ENCODE measurements at regions of chr4 and their contacts with region 1.

Region 1: DNA sequence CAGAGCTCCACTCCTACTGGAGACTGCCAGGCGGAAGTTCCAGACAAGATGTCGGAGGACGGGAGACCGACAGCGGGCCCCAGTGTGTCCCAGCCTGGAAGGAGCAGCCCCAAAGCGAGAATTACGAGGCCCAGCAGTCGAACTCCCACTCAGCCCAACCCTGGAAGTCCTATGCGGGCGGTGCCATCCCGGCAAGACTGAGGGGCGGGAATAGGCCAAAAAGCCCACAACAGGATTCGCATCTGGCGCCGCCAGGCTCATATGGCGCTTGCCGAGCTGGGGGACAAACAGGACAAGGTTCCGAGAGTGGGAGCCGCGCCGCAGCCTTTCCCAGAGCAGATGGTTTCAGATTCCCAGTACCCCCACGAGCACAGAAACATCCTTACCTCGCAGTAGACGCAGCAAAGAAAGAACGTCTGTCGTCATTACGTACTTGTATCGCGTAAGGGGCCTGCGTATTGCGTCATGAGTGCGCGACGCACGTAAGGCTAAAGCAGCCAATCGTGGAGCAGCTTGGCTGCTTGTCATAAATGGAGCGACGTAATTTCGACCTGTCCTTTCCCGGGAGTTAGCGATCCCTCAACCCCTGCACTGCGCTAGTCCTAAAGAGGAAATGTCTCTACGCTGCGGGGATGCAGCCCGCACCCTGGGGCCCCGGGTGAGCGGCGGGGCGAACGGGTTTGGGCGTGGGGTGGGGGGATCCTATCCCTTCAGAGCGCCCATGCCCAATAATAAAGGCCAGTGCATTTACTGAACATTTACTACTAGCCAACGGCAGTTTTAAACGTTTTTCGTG is at the starts of genes LIAS and RPL9:
- DNase-seq: peak; percentile 95
- ATAC-seq: peak; percentile 89
- H3K4me3 Mint-ChIP-seq: peak within 1 kb of the TSS; percentile 91
- H3K27ac Mint-ChIP-seq: peak within 1 kb of the TSS; percentile 97
- H3K4me1 Mint-ChIP-seq: peaks cover 56% of the 10 kb centered on the region
- H3K27me3 Mint-ChIP-seq: no peaks in the 10 kb centered on the region
- total RNA-seq, gene LIAS: 15.3 to 16.1 TPM
- total RNA-seq, gene RPL9: 1,107 to 1,219 TPM

Region 2: DNA sequence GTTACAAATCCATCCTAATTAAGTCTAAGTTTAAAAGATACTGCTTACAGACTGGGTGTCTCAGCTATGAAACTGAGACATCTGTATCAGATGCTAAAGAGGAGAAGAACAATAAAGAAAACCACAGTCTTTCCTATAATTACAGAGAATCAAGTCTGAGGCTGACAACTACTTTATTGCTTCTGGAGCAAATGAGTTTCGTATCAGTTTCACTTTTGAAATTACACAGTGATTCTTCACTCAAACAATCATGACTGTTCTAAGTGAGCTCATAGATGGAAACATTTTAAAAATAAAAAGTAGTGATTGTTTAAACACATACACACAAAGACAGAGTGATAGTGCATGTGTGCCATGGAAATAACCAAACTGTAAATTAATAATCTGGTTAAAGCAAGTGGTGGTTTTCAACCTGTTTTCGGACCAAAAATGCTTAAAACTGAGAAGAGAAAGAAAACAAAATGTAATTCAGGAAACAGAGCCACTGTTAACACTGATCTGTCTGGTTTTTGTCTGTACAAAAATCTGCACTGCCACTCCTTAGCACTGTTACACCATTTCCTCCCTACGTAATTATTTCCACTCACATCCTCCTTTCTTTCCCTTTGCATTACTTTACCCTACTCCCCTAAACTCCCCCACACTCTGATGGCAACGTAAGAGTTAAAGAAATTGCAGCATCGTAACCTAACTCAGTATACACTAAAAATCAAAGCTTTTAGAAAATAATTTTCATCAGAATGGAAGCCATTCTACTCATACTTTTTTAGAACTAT is 105.0 kb before region 1 on chr4:
- CTCF ChIA-PET with region 1: no interaction called
- POLR2A ChIA-PET with region 1: interaction called, 16 read pairs
- DNase-seq: peak; percentile 40
- ATAC-seq: peak; percentile 84
- H3K4me3 Mint-ChIP-seq: peak overlapping the region; percentile 83
- H3K27ac Mint-ChIP-seq: peak overlapping the region; percentile 98
- H3K4me1 Mint-ChIP-seq: peaks cover 55% of the 10 kb centered on the region
- H3K27me3 Mint-ChIP-seq: no peaks in the 10 kb centered on the region

Region 3: GRCh38 chr4:39365830-39366771 is 92.6 kb before region 1 on chr4 and contains the start of gene RFC1:
- CTCF ChIA-PET with region 1: interaction called, 3 read pairs
- POLR2A ChIA-PET with region 1: interaction called, 16 read pairs
- DNase-seq: peak; percentile 96
- ATAC-seq: peak; percentile 92
- H3K4me3 Mint-ChIP-seq: peak within 1 kb of the TSS; percentile 95
- H3K27ac Mint-ChIP-seq: peak within 1 kb of the TSS; percentile 95
- H3K4me1 Mint-ChIP-seq: peaks cover 29% of the 10 kb centered on the region
- H3K27me3 Mint-ChIP-seq: no peaks in the 10 kb centered on the region
- total RNA-seq, gene RFC1: 79.6 to 82.2 TPM

Region 4: GRCh38 chr4:39446751-39447573 is 11.7 kb before region 1 on chr4:
- CTCF ChIA-PET with region 1: interaction called, 6 read pairs
- POLR2A ChIA-PET with region 1: interaction called, 19 read pairs
- DNase-seq: peak; percentile 48
- ATAC-seq: peak; percentile 64
- H3K4me3 Mint-ChIP-seq: peak overlapping the region; percentile 38
- H3K27ac Mint-ChIP-seq: no peak overlapping the region
- H3K4me1 Mint-ChIP-seq: peaks cover 17% of the 10 kb centered on the region
- H3K27me3 Mint-ChIP-seq: no peaks in the 10 kb centered on the region

Region 5: GRCh38 chr4:39480902-39481695 is 22.4 kb after region 1 on chr4:
- CTCF ChIA-PET with region 1: no interaction called
- POLR2A ChIA-PET with region 1: no interaction called
- DNase-seq: no peak
- ATAC-seq: no peak
- H3K4me3 Mint-ChIP-seq: no peak overlapping the region
- H3K27ac Mint-ChIP-seq: no peak overlapping the region
- H3K4me1 Mint-ChIP-seq: no peaks in the 10 kb centered on the region
- H3K27me3 Mint-ChIP-seq: no peaks in the 10 kb centered on the region

Region 6: GRCh38 chr4:39697740-39698423 is 239.2 kb after region 1 on chr4 and contains the start of gene UBE2K:
- CTCF ChIA-PET with region 1: no interaction called
- POLR2A ChIA-PET with region 1: interaction called, 11 read pairs
- DNase-seq: peak; percentile 90
- ATAC-seq: peak; percentile 90
- H3K4me3 Mint-ChIP-seq: peak within 1 kb of the TSS; percentile 99
- H3K27ac Mint-ChIP-seq: peak within 1 kb of the TSS; percentile 99
- H3K4me1 Mint-ChIP-seq: peaks cover 38% of the 10 kb centered on the region
- H3K27me3 Mint-ChIP-seq: no peaks in the 10 kb centered on the region
- total RNA-seq, gene UBE2K: 74.9 to 78.7 TPM

Region 7: DNA sequence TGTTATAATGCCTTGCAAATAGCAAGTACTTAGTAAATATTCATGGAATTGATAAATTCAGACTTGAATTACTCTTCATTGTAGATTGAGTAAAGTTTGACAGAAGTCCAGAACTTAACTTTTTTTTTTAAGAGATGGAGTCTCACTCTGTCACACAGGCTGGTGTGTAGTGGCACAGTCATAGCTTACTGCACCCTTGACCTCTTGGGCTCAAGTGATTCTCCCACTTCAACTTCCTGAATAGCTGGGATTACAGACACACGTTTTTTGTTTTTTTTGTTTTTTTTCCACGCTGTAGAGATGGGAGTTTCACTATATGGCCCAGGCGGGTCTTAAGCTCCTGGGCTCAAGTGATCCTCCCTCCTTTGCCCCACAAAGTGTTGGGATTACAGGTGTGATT is 271.4 kb after region 1 on chr4:
- CTCF ChIA-PET with region 1: no interaction called
- POLR2A ChIA-PET with region 1: no interaction called
- DNase-seq: no peak
- ATAC-seq: no peak
- H3K4me3 Mint-ChIP-seq: no peak overlapping the region
- H3K27ac Mint-ChIP-seq: no peak overlapping the region
- H3K4me1 Mint-ChIP-seq: peaks cover 6% of the 10 kb centered on the region
- H3K27me3 Mint-ChIP-seq: no peaks in the 10 kb centered on the region

Region 8: DNA sequence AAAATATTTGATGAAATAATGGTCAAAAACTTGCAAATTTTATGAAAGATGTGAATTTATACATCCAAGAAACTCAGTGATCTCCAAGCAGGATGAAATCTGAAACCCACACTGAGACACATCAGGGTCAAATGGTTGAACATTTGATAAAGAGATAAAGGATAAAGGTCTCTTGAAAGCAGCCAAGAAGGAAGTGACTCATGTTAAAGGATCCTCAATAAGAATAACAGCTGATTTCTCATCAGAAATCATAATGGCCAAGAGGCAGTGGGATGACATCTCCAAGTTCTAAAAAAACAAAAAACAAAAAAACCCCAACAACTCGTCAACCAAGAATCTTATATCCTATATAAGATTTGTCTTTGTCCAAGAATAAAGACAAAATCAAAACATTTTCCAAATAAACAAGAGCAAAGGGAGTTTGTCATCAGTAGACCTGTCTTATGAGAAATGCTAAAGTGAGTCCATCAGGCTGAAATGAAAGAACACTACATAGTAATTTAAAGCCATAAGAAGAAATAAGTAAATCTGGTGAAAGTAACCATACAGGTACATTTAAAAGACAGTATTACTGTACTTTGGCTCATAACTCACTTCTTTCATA is 397.3 kb after region 1 on chr4:
- CTCF ChIA-PET with region 1: no interaction called
- POLR2A ChIA-PET with region 1: no interaction called
- DNase-seq: no peak
- ATAC-seq: no peak
- H3K4me3 Mint-ChIP-seq: no peak overlapping the region
- H3K27ac Mint-ChIP-seq: no peak overlapping the region
- H3K4me1 Mint-ChIP-seq: peaks cover 12% of the 10 kb centered on the region
- H3K27me3 Mint-ChIP-seq: no peaks in the 10 kb centered on the region

Measured in activated CD8-positive, alpha-beta T cell treated with anti-CD3 and anti-CD28 coated beads, Interleukin-2, amount 10 ng/mL, durations not matched to agents 7 days and 5 days (primary cell).